Activated naive CD4-positive, alpha-beta T cell treated with anti-CD3 and anti-CD28 coated beads for 36 hours (primary cell): ENCODE measurements at regions of chr5 and their contacts with region 1.

Region 1: GRCh38 chr5:56838409-56839039 is 23.2 kb downstream of the MAP3K1 start:
- DNase-seq: no peak
- H3K4me3 Mint-ChIP-seq: peak overlapping the region; percentile 47
- H3K27ac Mint-ChIP-seq: peak overlapping the region; percentile 74
- H3K4me1 Mint-ChIP-seq: peaks cover 75% of the 10 kb centered on the region
- H3K27me3 Mint-ChIP-seq: no peaks in the 10 kb centered on the region

Region 2: GRCh38 chr5:55936100-55936693 is 902.3 kb before region 1 on chr5:
- CTCF ChIA-PET with region 1: interaction called, 3 read pairs
- intact Hi-C with region 1: loop called (anchors 5 kb)
- DNase-seq: peak; percentile 93
- H3K4me3 Mint-ChIP-seq: no peak overlapping the region
- H3K27ac Mint-ChIP-seq: no peak overlapping the region
- H3K4me1 Mint-ChIP-seq: peaks cover 15% of the 10 kb centered on the region
- H3K27me3 Mint-ChIP-seq: no peaks in the 10 kb centered on the region

Region 3: DNA sequence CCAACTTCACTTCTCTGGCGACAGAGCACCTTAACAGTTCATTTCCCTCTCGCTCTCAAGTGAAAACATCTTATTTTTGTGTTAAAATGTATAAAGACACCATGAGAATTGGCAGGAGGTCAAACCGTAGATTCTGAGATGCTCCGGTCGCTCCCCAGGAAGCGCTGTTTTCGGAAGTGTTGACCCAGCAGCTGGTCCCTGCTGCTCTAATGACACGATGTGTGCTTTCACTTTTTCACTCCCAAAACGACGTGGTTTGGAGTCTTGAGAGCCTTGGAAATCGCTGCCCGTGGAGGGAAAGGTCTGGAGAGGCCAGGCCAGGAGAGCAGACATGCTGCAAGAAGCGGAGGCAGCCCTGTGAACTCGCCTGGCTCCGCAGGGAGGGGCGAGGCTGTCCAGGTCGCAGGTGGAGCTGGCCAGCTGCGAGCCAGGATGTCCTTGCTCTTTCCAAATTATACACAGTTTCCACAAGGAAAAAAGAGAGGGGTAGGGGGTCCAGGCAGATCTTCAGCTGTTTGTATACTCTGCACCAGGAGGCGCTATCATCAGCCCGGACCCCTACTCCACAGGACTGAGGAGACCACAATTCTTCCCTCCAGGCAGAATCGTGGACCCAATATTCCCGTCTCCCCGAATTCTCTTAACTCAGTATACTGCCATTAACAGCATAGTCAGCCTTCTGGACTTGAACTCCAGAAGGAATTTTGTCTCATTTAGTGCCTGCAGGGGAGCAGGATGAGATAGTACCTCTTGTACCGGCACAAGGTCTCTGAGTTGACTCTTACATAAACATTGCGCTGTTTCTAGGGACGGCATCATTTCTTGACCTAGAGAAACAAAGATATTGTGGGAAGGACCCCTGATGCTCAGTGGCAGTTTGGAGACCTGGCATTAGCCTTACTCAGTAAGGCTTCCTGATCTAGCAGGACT is 356.8 kb before region 1 on chr5:
- CTCF ChIA-PET with region 1: interaction called, 8 read pairs
- intact Hi-C with region 1: loop called (anchors 5 kb)
- DNase-seq: peak; percentile 14
- H3K4me3 Mint-ChIP-seq: peak overlapping the region; percentile 73
- H3K27ac Mint-ChIP-seq: no peak overlapping the region
- H3K4me1 Mint-ChIP-seq: peaks cover 30% of the 10 kb centered on the region
- H3K27me3 Mint-ChIP-seq: no peaks in the 10 kb centered on the region

Region 4: GRCh38 chr5:56692359-56693219 is 145.9 kb before region 1 on chr5:
- CTCF ChIA-PET with region 1: no interaction called
- intact Hi-C with region 1: loop called (anchors 5 kb)
- DNase-seq: no peak
- H3K4me3 Mint-ChIP-seq: peak overlapping the region; percentile 30
- H3K27ac Mint-ChIP-seq: peak overlapping the region; percentile 14
- H3K4me1 Mint-ChIP-seq: peaks cover 76% of the 10 kb centered on the region
- H3K27me3 Mint-ChIP-seq: no peaks in the 10 kb centered on the region

Region 5: GRCh38 chr5:56827049-56827448 is 11.5 kb before region 1 on chr5:
- CTCF ChIA-PET with region 1: interaction called, 32 read pairs
- intact Hi-C with region 1: no loop called
- DNase-seq: peak; percentile 30
- H3K4me3 Mint-ChIP-seq: peak overlapping the region; percentile 4
- H3K27ac Mint-ChIP-seq: peak overlapping the region; percentile 79
- H3K4me1 Mint-ChIP-seq: peaks cover 91% of the 10 kb centered on the region
- H3K27me3 Mint-ChIP-seq: no peaks in the 10 kb centered on the region